ENCODE measurements at regions of chr17 and their contacts with region 1.

Region 1: GRCh38 chr17:57861000-57861789 is 11.4 kb upstream of the MRPS23 start:
- DNase-seq: peak; percentile 39
- CTCF ChIP-seq: no peak

Region 2: GRCh38 chr17:57849874-57850754 is 11.1 kb before region 1 on chr17 and contains the start of gene MRPS23:
- CTCF ChIA-PET with region 1: interaction called, 66 read pairs
- POLR2A ChIA-PET with region 1: no interaction called
- DNase-seq: peak; percentile 96
- CTCF ChIP-seq: no peak

Region 3: GRCh38 chr17:57955183-57955931 is 94.2 kb after region 1 on chr17 and contains the start of gene CUEDC1:
- CTCF ChIA-PET with region 1: interaction called, 33 read pairs
- POLR2A ChIA-PET with region 1: interaction called, 4 read pairs
- DNase-seq: peak; percentile 83
- CTCF ChIP-seq: peak; percentile 34

Region 4: DNA sequence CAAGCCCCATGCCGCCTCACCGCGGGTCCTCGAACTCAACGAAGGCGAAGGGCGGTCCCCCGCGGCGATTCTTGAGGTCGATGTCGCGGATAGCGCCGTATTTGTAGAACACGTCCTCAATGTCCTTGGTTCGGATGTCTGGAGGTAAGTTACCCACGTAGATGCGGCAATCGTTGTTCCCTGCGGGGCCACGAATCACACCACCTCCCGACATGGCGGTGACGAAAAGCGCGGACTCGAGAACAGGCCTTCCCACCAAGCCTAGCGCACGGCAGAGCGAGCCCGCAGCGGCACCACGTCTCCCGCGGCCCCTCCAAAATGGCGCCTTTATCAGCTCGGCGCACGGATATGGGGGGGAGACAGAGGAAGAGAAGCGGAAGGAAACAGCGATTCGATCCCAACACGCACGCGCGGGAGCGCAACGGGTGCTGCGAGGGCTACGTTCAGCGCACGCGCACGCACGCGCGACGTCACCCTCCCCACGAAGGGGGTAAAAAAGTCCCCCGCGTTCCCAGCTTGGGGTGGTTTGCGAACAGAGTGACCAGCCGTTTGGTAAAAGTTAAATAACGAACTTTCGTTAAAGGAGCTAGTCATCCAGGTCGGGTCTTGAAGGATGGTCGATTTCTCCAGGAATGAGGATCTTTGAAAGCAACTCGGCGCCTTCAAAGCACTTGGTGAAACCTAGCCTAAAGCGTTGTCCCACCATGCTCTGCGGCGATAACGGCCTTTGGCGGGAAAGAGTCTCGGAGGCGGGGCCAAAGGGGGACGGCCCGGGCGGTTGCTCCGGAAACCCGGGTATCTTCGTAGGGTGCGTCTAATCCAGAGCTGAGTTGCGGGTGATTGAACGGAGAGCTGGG is 146.0 kb after region 1 on chr17 and contains the start of gene SRSF1:
- CTCF ChIA-PET with region 1: interaction called, 478 read pairs
- POLR2A ChIA-PET with region 1: interaction called, 4 read pairs
- DNase-seq: peak; percentile 96
- CTCF ChIP-seq: no peak